Psoas muscle (tissue), 8 donors: ENCODE measurements at regions of chr6 and their contacts with region 1.

Region 1: GRCh38 chr6:21438237-21438985 is 155.1 kb upstream of the SOX4 start:
- DNase-seq: no peak
- ATAC-seq: peak; percentile 67 to 92 (median 84)
- H3K4me3 ChIP-seq: no peak overlapping the region
- H3K27ac ChIP-seq: peak overlapping the region; percentile 76
- H3K4me1 ChIP-seq: peaks cover 10% of the 10 kb centered on the region
- H3K27me3 ChIP-seq: no peaks in the 10 kb centered on the region
- CTCF ChIP-seq: no peak

Region 2: DNA sequence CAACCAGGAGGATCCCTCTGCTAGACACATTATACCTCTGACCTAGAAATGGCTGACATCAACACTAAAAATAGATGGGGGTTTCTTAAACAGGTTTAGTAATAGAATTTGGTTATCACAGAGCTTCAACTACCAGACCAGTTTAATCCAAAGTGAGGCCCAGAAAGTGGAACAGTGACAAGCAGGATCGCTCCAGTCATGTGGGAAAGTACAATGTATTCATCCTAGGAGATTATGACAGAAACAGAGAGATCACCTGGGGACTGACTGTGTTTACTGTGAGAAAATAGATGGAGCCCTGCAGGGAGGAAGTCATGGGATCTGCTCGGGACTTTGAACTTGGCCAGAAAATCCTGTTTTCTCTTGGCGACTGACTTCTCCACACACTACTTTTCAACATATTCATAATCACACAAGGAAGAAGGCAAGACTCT is 83.6 kb before region 1 on chr6:
- intact Hi-C with region 1: loop called in 1 of 2 experiments (anchors 10 kb)
- DNase-seq: no peak
- ATAC-seq: peak; percentile 77 to 95 (median 92)
- H3K4me3 ChIP-seq: no peak overlapping the region
- H3K27ac ChIP-seq: peak overlapping the region; percentile 83
- H3K4me1 ChIP-seq: peaks cover 18% of the 10 kb centered on the region
- H3K27me3 ChIP-seq: no peaks in the 10 kb centered on the region
- CTCF ChIP-seq: no peak